Endothelial cell of umbilical vein (primary cell): ENCODE measurements at regions of chr2 and their contacts with region 1.

Region 1: GRCh38 chr2:27954771-27955383 is 64.3 kb downstream of the BABAM2 start:
- DNase-seq: peak; percentile 99
- H3K4me3 ChIP-seq: no peak overlapping the region
- H3K27ac ChIP-seq: peak overlapping the region; percentile 95
- H3K4me1 ChIP-seq: peaks cover 47% of the 10 kb centered on the region
- H3K27me3 ChIP-seq: no peaks in the 10 kb centered on the region
- CTCF ChIP-seq: peak; percentile 33 to 37
- POLR2A ChIP-seq: peak; percentile 94

Region 2: DNA sequence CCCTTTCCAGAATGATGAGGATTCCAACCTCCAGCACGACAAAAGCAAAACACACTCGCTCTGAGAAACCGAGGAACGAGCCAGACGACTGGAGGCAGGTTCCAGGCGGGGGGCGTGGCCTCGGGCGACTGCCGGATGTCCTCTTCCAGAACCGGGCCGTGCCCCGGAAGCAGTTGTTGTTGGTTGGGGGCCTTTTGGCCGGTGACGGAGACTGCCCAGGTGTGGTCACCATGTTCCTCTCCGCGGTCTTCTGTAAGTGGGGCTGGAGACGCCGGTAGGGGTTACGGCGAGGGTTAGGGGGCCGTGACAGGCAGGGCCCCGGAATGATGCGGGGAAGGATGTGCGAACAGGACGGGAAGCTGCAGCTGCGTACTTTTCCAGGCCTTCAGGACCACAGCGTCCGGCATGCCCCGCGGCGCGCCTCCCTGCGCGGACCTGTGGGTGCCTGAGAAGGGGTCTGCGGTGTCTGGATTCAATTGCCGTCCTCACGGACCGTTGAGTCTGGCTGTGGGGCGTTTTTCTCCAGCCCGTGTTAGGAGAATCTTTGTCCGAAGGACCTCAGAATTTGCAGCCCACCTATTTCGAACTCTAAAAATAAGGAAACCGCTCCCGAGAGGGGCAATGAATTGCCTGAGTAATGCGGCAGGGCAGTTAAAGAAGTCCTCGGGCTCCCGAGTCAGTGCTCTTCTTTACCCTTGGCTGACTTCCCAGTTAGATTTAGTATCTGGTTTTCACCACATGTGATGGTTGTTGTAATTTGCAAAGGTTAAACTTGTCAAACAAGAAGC is 183.1 kb before region 1 on chr2 and contains the start of gene MRPL33:
- CTCF ChIA-PET with region 1: no interaction called
- POLR2A ChIA-PET with region 1: no interaction called
- dilution Hi-C with region 1: no loop called
- intact Hi-C with region 1: loop called (anchors 2 kb)
- DNase-seq: peak; percentile 93
- H3K4me3 ChIP-seq: peak within 1 kb of the TSS; percentile 91 to 95 (median 95)
- H3K27ac ChIP-seq: peak within 1 kb of the TSS; percentile 90
- H3K4me1 ChIP-seq: peaks cover 25% of the 10 kb centered on the region
- H3K27me3 ChIP-seq: no peaks in the 10 kb centered on the region
- CTCF ChIP-seq: no peak
- POLR2A ChIP-seq: peak; percentile 90
- total RNA-seq, gene MRPL33: 96.7 and 97.4 TPM in 2 replicates

Region 3: DNA sequence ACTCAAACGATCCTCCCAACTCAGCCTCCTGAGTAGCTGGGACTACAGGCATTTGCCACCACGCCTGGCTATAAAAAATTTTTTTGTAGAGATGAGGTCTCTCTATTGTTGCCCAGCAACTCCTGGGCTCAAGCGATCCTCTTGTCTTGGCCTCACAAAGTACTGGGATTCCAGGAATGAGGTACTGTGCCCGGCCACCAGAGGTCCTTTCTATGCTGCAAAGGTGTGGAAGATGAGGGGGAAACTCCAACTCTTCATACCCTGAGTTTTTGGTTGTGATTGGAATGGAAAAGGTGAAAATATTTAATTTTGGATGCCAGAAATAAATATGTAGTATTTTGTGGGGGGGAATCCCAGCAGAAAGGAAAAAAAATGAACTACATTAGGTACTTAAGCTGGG is 147.4 kb before region 1 on chr2:
- CTCF ChIA-PET with region 1: interaction called, 10 read pairs
- POLR2A ChIA-PET with region 1: no interaction called
- dilution Hi-C with region 1: no loop called
- intact Hi-C with region 1: loop called (anchors 1 kb)
- DNase-seq: peak; percentile 57
- H3K4me3 ChIP-seq: no peak overlapping the region
- H3K27ac ChIP-seq: no peak overlapping the region
- H3K4me1 ChIP-seq: peaks cover 18% of the 10 kb centered on the region
- H3K27me3 ChIP-seq: no peaks in the 10 kb centered on the region
- CTCF ChIP-seq: peak; percentile 57 to 63
- POLR2A ChIP-seq: no peak

Region 4: DNA sequence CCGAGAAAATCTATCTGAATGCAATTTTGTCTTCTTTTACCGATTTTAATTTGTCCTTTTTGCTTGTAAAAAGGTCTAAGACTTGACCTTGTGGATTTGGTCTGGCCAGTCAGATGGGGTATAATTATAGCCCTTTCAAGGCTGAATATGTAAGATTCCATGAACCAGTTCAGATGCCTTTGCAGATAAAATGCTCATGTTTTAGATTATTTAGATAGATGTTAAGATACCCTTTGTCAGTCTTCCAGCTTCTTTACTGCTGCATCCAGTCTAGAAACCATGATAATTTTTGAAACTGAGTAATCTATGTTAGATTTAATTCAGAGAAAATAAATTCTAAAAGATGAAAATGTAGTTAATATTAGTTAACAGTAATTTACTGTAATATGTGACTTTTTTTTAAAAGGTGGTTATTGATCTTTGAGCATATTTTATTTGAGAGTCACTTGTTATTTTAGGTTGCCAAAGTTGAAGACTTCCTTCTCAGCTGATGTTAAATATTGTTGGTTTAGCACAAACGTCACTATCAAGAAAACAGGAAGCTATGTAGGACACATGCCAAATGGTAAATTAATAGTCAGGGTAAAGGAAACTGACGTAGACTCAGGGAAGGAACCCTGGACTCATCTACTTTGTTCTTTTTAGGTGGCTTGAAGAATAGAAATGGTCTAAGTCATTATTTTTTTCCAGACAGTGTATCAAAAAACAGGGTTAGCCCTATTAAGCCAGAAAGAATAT is 34.6 kb before region 1 on chr2:
- CTCF ChIA-PET with region 1: interaction called, 5 read pairs
- POLR2A ChIA-PET with region 1: no interaction called
- dilution Hi-C with region 1: no loop called
- intact Hi-C with region 1: loop called (anchors 1 kb)
- DNase-seq: peak; percentile 95
- H3K4me3 ChIP-seq: peak overlapping the region in 1 of 3 experiments; percentile 14
- H3K27ac ChIP-seq: peak overlapping the region; percentile 96
- H3K4me1 ChIP-seq: peaks cover 17% of the 10 kb centered on the region
- H3K27me3 ChIP-seq: no peaks in the 10 kb centered on the region
- CTCF ChIP-seq: no peak
- POLR2A ChIP-seq: no peak

Region 5: DNA sequence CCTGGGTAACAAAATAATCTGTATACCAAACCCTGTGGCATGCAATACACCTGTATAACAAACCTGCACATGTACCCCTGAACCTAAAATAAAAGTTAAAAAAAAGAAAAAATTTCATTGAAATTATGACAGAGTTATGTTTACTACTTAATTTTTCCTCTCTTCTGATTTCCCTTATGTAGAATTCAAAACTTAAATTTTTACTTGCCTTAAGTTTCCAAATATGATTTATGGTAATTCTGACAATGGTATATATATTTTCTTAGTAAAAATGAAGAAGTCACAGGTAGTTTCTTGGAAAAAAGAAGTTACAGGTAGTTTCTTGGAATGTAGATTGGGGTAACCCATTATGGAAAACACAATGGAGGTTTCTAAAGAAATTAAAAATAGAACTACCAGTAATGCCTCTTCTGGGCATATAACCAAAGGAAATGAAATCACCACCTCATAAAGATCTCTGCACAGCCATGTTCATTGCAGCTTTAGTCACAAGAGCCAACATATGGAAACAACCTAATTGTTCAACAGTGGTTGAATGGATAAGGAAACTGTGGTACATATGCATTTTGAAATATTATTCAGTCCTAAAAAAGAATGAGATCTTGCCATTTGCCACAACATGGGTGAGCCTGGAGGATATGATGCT is 100.6 kb after region 1 on chr2:
- CTCF ChIA-PET with region 1: no interaction called
- POLR2A ChIA-PET with region 1: no interaction called
- dilution Hi-C with region 1: no loop called
- intact Hi-C with region 1: loop called (anchors 2 kb)
- DNase-seq: peak; percentile 47
- H3K4me3 ChIP-seq: no peak overlapping the region
- H3K27ac ChIP-seq: no peak overlapping the region
- H3K4me1 ChIP-seq: peaks cover 21% of the 10 kb centered on the region
- H3K27me3 ChIP-seq: no peaks in the 10 kb centered on the region
- CTCF ChIP-seq: no peak
- POLR2A ChIP-seq: no peak

Region 6: GRCh38 chr2:28068088-28068487 is 113.2 kb after region 1 on chr2:
- CTCF ChIA-PET with region 1: no interaction called
- POLR2A ChIA-PET with region 1: no interaction called
- dilution Hi-C with region 1: no loop called
- intact Hi-C with region 1: no loop called
- DNase-seq: peak; percentile 67
- H3K4me3 ChIP-seq: no peak overlapping the region
- H3K27ac ChIP-seq: no peak overlapping the region
- H3K4me1 ChIP-seq: no peaks in the 10 kb centered on the region
- H3K27me3 ChIP-seq: no peaks in the 10 kb centered on the region
- CTCF ChIP-seq: no peak
- POLR2A ChIP-seq: no peak

Region 7: DNA sequence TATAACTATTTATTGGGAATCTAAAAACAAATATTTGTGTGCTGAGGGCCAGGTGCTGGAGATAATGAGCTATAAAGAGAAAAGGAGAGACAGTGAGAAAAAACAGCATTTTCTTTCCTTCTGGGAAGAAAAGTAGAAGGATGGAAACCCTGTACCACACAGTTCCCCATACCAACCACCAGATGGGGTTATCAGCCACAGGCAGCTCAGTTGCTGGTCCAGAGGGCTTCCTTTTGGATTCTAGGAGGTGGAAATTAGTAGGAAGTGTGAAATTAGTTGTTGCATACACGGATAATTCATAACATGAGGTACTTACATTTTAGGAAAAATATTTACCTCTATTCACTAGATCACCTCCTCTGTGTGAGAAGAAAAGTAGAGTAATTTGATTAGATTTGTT is 200.8 kb after region 1 on chr2:
- CTCF ChIA-PET with region 1: no interaction called
- POLR2A ChIA-PET with region 1: no interaction called
- dilution Hi-C with region 1: no loop called
- intact Hi-C with region 1: loop called (anchors 1 kb)
- DNase-seq: no peak
- H3K4me3 ChIP-seq: no peak overlapping the region
- H3K27ac ChIP-seq: no peak overlapping the region
- H3K4me1 ChIP-seq: no peaks in the 10 kb centered on the region
- H3K27me3 ChIP-seq: no peaks in the 10 kb centered on the region
- CTCF ChIP-seq: peak; percentile 46 to 47
- POLR2A ChIP-seq: no peak

Region 8: DNA sequence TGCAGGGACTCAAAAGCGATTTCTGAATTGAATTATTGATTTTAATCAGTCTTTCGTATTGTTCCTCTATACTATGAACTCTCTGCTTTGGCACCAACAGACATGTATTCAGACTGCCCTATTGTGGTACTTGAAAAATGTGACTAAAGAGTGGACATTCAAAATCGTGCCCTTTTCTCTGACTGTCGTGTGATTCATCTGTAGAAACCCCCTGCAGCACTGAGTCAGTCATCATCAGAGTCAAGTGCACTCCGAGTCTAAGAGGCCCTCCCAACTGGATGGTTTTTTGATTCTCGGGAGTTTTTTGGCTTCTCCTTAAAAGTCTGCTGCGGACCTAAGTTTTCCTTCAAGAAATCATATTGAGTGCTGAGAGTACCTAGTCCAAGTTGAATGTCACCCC is 341.4 kb after region 1 on chr2:
- CTCF ChIA-PET with region 1: no interaction called
- POLR2A ChIA-PET with region 1: no interaction called
- dilution Hi-C with region 1: no loop called
- intact Hi-C with region 1: no loop called
- DNase-seq: no peak
- H3K4me3 ChIP-seq: no peak overlapping the region
- H3K27ac ChIP-seq: no peak overlapping the region
- H3K4me1 ChIP-seq: peaks cover 5% of the 10 kb centered on the region
- H3K27me3 ChIP-seq: no peaks in the 10 kb centered on the region
- CTCF ChIP-seq: no peak
- POLR2A ChIP-seq: no peak